Panc1 (cell line): ENCODE measurements at regions of chr7 and their contacts with region 1.

Region 1: DNA sequence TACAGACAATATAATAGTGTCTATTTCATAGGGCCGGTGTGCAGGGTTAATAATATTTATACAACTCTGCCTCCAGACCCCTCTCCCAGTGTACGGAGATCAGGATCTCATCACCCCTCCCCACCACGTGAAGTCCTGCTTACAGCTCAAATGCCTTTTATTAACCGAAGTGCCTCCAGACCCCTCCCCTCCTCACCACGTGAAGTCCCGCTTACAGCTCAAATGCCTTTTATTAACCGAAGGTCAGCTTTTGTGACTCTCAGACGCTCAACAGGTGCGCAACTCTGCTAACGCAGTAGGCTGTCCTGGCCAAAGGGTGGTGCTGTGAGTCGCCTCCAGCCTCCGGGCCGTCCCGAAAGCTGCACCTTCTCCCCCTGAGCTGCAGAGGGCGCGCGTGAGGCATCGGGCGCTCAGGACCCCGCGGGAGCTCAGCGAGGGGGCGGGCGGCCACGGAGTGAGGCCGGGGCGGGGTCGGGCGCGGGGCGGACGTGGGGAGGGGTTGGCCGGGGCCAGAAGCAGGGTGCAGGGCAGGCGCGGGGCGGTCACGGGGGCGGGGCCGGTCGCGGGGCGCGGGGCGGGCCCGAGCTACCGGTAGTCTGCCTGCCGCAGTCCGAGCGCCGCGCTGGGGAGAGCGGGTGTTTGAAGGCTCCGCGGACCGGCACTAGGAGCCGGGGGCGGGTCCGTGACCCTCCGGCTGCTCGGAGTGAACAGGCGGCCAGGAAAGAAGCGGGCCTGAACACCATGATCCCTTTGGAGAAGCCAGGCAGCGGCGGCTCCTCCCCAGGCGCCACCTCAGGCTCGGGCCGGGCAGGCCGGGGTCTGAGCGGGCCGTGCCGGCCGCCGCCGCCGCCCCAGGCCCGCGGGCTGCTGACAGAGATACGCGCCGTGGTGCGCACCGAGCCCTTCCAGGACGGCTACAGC is at the start of gene STK17A:
- DNase-seq: peak; percentile 82
- ATAC-seq: peak; percentile 93
- H3K4me3 ChIP-seq: peak within 1 kb of the TSS; percentile 89
- H3K27ac ChIP-seq: peak within 1 kb of the TSS; percentile 90
- H3K4me1 ChIP-seq: peaks cover 25% of the 10 kb centered on the region
- H3K27me3 ChIP-seq: peaks cover 19% of the 10 kb centered on the region
- CTCF ChIP-seq: peak; percentile 100
- total RNA-seq, gene STK17A: 21.3 TPM

Region 2: DNA sequence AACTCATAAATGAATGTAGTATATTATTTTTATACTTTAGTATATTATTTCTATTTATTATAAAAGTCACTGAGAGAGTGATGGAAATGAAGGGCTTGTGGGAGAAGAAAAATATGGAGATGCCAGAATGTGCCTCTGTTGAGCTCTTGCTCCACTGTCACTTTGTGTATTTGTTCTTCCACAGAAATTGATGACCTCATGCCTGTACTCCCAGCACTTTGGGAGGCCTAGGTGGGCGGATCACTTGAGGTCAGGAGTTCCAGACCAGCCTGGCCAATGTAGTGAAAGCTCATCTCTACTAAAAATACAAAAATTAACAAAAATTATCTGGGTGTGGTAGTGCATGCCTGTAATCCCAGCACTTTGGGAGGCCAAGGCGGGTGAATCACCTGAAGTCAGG is 76.3 kb before region 1 on chr7:
- CTCF ChIA-PET with region 1: interaction called, 10 read pairs
- POLR2A ChIA-PET with region 1: no interaction called
- in situ Hi-C with region 1: no loop called
- intact Hi-C with region 1: no loop called
- DNase-seq: no peak
- ATAC-seq: no peak
- H3K4me3 ChIP-seq: no peak overlapping the region
- H3K27ac ChIP-seq: no peak overlapping the region
- H3K4me1 ChIP-seq: no peaks in the 10 kb centered on the region
- H3K27me3 ChIP-seq: peaks cover 19% of the 10 kb centered on the region
- CTCF ChIP-seq: no peak

Region 3: GRCh38 chr7:43612599-43613589 is 30.1 kb after region 1 on chr7:
- CTCF ChIA-PET with region 1: no interaction called
- POLR2A ChIA-PET with region 1: no interaction called
- in situ Hi-C with region 1: no loop called
- intact Hi-C with region 1: no loop called
- DNase-seq: no peak
- ATAC-seq: no peak
- H3K4me3 ChIP-seq: no peak overlapping the region
- H3K27ac ChIP-seq: no peak overlapping the region
- H3K4me1 ChIP-seq: no peaks in the 10 kb centered on the region
- H3K27me3 ChIP-seq: no peaks in the 10 kb centered on the region
- CTCF ChIP-seq: no peak

Region 4: DNA sequence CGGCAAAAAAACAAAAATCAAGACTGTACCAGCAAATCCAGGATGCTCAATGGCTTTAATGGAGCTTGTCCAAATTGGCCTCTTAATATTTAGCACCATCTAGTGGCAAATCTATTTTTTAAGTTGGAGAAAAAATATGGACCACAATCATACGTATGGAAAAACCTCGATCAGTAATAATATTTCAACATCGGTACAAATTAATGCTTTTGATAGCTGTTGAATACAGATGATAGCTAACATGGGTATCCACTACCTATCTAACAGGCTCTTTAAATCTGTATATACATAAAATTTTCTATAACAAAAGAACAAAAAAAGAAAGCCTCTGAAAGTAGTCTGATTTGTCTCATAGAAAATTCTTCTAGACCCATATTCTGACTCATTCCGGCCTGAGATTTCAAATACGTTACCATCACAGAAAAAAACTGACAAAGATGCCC is 117.3 kb after region 1 on chr7:
- CTCF ChIA-PET with region 1: interaction called, 128 read pairs
- POLR2A ChIA-PET with region 1: interaction called, 20 read pairs
- in situ Hi-C with region 1: loop called (anchors 25 kb)
- intact Hi-C with region 1: loop called (anchors 2 kb)
- DNase-seq: peak; percentile 42
- ATAC-seq: peak; percentile 83
- H3K4me3 ChIP-seq: no peak overlapping the region
- H3K27ac ChIP-seq: no peak overlapping the region
- H3K4me1 ChIP-seq: no peaks in the 10 kb centered on the region
- H3K27me3 ChIP-seq: no peaks in the 10 kb centered on the region
- CTCF ChIP-seq: peak; percentile 83; the same call in 1 of the 2 replicates

Region 5: DNA sequence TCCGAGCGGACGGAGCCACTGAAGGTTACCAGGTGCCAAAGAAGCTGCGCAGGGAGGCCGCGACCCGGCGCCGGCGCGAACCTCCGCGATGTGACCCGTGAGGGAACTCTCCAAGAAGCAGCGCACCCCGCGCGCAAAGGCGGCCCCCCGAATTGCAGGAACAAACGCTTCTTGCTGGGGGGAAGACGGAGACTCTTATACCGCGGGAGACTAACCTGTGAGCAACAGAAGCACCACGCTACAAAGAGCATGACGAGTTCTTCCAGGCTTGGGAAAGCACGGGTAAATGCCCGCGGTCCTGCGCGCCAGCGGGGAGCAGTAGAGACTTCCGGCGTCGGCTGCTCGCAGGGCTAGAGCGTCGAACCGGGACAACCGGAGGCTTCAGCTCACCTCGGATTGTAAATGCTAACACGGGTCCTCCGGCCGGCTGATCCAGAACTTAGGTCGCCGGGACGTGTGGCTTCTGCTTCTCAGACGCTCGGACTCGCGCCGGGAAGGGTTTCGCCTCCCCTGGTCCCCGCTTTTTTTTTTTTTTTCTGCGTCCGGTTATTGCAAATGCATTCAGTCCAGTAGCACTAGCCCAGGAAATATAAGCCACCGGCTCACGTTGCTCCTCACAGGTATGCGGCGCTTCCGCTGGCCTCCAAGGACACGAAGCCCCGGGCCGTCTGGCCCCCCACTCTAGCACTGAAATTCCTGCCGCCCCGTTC is 146.6 kb after region 1 on chr7 and contains the start of gene COA1:
- CTCF ChIA-PET with region 1: interaction called, 16 read pairs
- POLR2A ChIA-PET with region 1: no interaction called
- in situ Hi-C with region 1: loop called (anchors 25 kb)
- intact Hi-C with region 1: loop called (anchors 5 kb)
- DNase-seq: peak; percentile 88
- ATAC-seq: peak; percentile 100
- H3K4me3 ChIP-seq: peak within 1 kb of the TSS; percentile 63 to 99
- H3K27ac ChIP-seq: peak within 1 kb of the TSS; percentile 92
- H3K4me1 ChIP-seq: peaks cover 13% of the 10 kb centered on the region
- H3K27me3 ChIP-seq: no peaks in the 10 kb centered on the region
- CTCF ChIP-seq: no peak
- total RNA-seq, gene COA1: 65.5 TPM

Region 6: DNA sequence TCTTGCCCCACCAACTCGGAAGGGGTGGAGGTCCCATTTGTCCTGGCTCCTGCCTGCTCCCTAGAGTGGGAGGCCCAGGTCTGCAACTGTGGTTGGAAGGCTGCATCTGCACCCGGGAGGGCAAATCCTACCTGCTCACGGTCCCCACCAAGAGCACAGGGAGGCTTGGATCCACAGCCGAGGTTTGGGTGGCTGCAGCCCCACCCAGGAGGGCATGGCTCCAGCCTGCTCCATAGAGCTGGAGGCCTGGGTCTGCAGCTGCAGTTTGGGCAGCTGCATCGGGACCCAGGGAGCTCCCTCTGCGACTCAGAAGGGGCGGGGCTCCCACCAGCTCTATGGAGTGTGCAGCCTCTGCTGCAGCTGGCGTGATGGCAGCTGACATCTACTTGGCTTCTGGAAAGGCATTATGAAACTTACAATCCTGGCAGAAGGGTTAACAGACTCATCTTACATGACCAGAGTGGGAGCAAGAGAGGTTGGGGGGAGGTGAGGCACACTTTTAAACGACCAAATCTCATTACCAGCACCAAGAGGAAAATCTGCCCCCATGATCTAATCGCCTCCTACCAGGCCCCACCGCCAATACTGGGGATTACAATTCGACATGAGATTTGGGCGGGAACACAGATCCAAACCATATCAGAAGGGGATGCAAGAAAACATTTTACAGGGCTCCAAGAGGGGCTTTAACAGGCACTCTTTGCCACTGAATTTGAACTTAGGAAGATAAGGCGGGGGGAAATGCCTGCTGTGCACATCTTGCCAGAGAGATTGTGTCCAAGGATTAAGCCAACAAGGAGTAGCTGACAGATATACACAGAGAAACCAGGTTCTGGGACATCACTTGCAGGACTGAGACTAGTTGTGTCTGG is 167.5 kb after region 1 on chr7:
- CTCF ChIA-PET with region 1: no interaction called
- POLR2A ChIA-PET with region 1: no interaction called
- in situ Hi-C with region 1: no loop called
- intact Hi-C with region 1: no loop called
- DNase-seq: no peak
- ATAC-seq: no peak
- H3K4me3 ChIP-seq: no peak overlapping the region
- H3K27ac ChIP-seq: no peak overlapping the region
- H3K4me1 ChIP-seq: no peaks in the 10 kb centered on the region
- H3K27me3 ChIP-seq: no peaks in the 10 kb centered on the region
- CTCF ChIP-seq: no peak